ENCODE measurements at regions of chr11 and their contacts with region 1.

Region 1: DNA sequence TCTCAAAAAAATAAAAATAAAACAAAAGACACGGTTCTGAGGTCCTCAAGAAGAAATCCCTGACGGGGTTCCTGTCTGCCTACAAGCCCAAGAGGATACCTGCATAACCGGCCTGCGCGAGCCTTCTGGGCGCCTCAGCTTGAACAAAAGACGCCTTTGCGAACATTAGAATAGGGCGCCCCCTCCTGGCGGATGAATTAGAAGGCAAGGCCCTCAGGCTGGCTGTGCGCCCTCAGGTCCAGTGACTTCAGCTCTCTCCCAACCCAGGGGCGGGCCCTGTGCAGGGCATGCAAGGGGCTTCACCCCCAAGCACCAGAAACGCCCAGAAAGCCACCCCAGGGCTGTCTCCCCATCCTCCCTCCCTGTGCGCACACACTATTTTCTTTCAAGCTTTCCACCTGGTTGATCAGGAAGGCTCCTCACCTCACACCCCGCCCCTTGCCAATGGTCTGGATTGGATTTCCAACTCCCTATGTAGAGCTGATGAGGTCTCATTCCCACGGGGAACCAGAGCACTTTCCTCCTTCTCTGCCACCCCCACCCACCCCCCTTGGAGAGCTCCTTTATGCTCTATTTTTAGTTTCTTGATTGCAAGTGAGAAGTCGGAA is 273.3 kb downstream of the BUD13 start:
- DNase-seq: peak; percentile 62 to 94 (median 87)
- ATAC-seq: peak; percentile 89
- H3K4me3 ChIP-seq: no peak overlapping the region
- H3K4me1 ChIP-seq: no peaks in the 10 kb centered on the region
- CTCF ChIP-seq: no peak

Region 2: GRCh38 chr11:116339306-116340098 is 160.0 kb before region 1 on chr11:
- intact Hi-C with region 1: no loop called
- DNase-seq: peak in 1 of 3 donors; percentile 37
- ATAC-seq: peak; percentile 95
- H3K4me3 ChIP-seq: no peak overlapping the region
- H3K4me1 ChIP-seq: no peaks in the 10 kb centered on the region
- CTCF ChIP-seq: no peak

Region 3: GRCh38 chr11:116357784-116358544 is 141.5 kb before region 1 on chr11:
- intact Hi-C with region 1: loop called in 1 of 2 experiments (anchors 10 kb)
- DNase-seq: peak in 2 of 3 donors; percentile 14 to 57
- ATAC-seq: peak; percentile 84
- H3K4me3 ChIP-seq: no peak overlapping the region
- H3K4me1 ChIP-seq: no peaks in the 10 kb centered on the region
- CTCF ChIP-seq: peak; percentile 45

Region 4: DNA sequence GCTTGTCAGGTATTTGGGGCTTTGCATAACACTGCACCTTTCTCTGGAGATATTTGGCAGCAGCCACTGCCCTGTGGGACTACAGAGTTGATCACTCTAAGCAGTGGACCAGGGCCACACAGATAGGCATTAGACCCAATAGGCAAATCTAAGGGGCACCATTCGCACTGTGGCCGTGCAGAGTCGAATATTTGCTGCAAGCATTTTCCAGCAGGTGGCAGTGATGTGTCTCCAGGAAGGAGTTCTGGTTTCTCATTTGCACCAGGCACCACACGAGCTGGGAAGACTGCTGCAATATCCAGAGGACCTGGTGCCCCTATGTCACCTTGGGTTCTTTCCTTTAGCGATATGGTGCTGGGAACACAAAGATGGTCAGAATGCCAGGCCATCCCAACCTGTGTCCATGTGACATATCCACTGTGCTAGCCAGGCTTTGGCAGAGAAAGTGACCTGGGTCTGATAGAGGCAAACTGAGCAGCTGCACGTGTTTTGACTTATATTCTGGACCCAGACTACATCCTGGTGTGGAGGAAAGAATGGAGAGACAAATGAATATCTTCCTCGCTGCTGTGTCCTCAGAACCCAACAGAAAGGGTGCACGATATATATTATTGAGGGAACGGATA is 45.4 kb before region 1 on chr11:
- intact Hi-C with region 1: loop called in 1 of 2 experiments (anchors 2 kb)
- DNase-seq: peak in 2 of 3 donors; percentile 54 to 83
- ATAC-seq: peak; percentile 82
- H3K4me3 ChIP-seq: no peak overlapping the region
- H3K4me1 ChIP-seq: no peaks in the 10 kb centered on the region
- CTCF ChIP-seq: peak; percentile 34

Region 5: DNA sequence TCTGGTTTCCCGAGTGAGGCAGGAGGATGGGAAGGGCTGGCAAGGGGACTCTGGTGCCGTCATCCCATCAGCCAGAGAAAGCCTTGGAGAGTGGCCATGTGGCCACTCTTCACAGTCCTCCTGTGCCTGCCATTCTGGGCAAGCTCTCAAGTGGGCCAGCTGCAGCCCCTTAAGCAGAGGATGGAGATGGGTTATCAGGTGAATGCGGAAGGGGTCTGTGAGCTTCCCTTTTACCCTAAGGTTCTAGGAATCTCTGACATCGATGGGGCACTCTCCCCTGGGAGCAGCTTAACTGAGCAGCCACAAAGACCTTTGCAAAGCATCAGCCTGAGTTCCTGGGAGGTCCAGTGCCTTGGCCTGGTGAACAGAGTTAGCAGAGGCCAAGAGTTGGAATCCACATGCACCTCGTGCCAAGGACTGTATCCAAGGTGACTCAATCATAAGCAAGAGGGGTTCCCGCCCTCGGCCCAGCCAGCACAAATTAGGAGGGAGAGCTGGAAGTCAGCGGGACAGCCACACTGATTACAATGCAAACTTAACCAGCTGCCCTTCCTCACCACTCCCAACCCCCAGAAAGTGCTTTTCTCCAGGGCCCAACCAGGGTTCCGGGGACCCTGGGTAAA is 79.6 kb after region 1 on chr11:
- intact Hi-C with region 1: no loop called
- DNase-seq: no peak
- ATAC-seq: no peak
- H3K4me3 ChIP-seq: no peak overlapping the region
- H3K4me1 ChIP-seq: no peaks in the 10 kb centered on the region
- CTCF ChIP-seq: no peak